OCI-LY7 (cell line): ENCODE measurements at regions of chr16 and their contacts with region 1.

Region 1: GRCh38 chr16:27426423-27427408 is 24.7 kb downstream of the IL21R start:
- DNase-seq: peak; percentile 94
- H3K4me3 ChIP-seq: peak overlapping the region; percentile 53
- H3K27ac ChIP-seq: peak overlapping the region; percentile 88
- H3K4me1 ChIP-seq: peaks cover 60% of the 10 kb centered on the region
- CTCF ChIP-seq: peak; percentile 48; the same call in 1 of the 2 replicates

Region 2: DNA sequence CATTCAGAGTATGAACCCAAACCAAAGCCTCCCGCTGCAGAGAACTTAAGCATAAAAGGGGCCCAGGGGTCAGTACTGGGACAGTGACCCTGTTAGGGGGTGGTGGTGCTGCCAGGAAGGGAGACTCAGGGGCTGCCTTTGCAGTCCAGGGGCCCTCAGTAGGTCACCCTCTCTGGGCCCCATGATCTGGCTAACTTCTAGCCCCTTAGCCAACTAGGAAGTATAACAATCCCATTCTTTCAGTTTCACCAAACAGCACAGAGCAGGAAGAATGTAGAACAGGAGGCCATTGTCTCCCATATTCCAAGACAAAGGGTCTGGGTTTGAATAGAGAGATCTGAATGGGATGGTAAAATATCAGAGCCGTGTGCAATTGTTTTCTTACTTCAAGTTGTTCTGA is 738.6 kb before region 1 on chr16:
- CTCF ChIA-PET with region 1: no interaction called
- POLR2A ChIA-PET with region 1: no interaction called
- intact Hi-C with region 1: no loop called
- DNase-seq: no peak
- H3K4me3 ChIP-seq: no peak overlapping the region
- H3K27ac ChIP-seq: no peak overlapping the region
- H3K4me1 ChIP-seq: peaks cover 14% of the 10 kb centered on the region
- CTCF ChIP-seq: no peak

Region 3: GRCh38 chr16:27408012-27408601 is 18.6 kb before region 1 on chr16:
- CTCF ChIA-PET with region 1: interaction called, 11 read pairs
- POLR2A ChIA-PET with region 1: interaction called, 16 read pairs
- intact Hi-C with region 1: no loop called
- DNase-seq: peak; percentile 42
- H3K4me3 ChIP-seq: peak overlapping the region; percentile 2
- H3K27ac ChIP-seq: peak overlapping the region; percentile 22
- H3K4me1 ChIP-seq: peaks cover 59% of the 10 kb centered on the region
- CTCF ChIP-seq: no peak

Region 4: GRCh38 chr16:27470567-27471431 is 44.1 kb after region 1 on chr16:
- CTCF ChIA-PET with region 1: no interaction called
- POLR2A ChIA-PET with region 1: no interaction called
- intact Hi-C with region 1: no loop called
- DNase-seq: no peak
- H3K4me3 ChIP-seq: no peak overlapping the region
- H3K27ac ChIP-seq: no peak overlapping the region
- H3K4me1 ChIP-seq: no peaks in the 10 kb centered on the region
- CTCF ChIP-seq: no peak